ENCODE measurements at regions of chr12 and their contacts with region 1.

Region 1: GRCh38 chr12:110577717-110578521 is 5.2 kb downstream of the PPTC7 start:
- DNase-seq: peak; percentile 66 to 89 (median 89)
- H3K4me3 ChIP-seq: peak overlapping the region in 1 of 3 experiments; percentile 4
- H3K4me3 Mint-ChIP-seq: peak overlapping the region; percentile 27 to 47
- H3K27ac ChIP-seq: peak overlapping the region; percentile 38 to 92
- H3K27ac Mint-ChIP-seq: peak overlapping the region; percentile 87 to 98 (median 97)
- H3K4me1 ChIP-seq: peaks cover 59 to 74% of the 10 kb centered on the region in 2 donors
- H3K4me1 Mint-ChIP-seq: peaks cover 70% of the 10 kb centered on the region
- H3K27me3 ChIP-seq: no peaks in the 10 kb centered on the region
- H3K27me3 Mint-ChIP-seq: peaks cover 0 to 6% (median 0%) of the 10 kb centered on the region in 3 donors
- CTCF ChIP-seq: no peak

Region 2: GRCh38 chr12:110312581-110313360 is 265.1 kb before region 1 on chr12:
- intact Hi-C with region 1: no loop called
- DNase-seq: peak; percentile 38 to 83 (median 69)
- H3K4me3 ChIP-seq: no peak overlapping the region
- H3K4me3 Mint-ChIP-seq: peak overlapping the region in 1 of 2 donors; percentile 39
- H3K27ac ChIP-seq: peak overlapping the region; percentile 34 to 53
- H3K27ac Mint-ChIP-seq: peak overlapping the region; percentile 67 to 91 (median 80)
- H3K4me1 ChIP-seq: peaks cover 42 to 61% of the 10 kb centered on the region in 2 donors
- H3K4me1 Mint-ChIP-seq: peaks cover 52% of the 10 kb centered on the region
- H3K27me3 ChIP-seq: no peaks in the 10 kb centered on the region
- H3K27me3 Mint-ChIP-seq: peaks cover 0 to 3% (median 0%) of the 10 kb centered on the region in 3 donors
- CTCF ChIP-seq: no peak

Region 3: DNA sequence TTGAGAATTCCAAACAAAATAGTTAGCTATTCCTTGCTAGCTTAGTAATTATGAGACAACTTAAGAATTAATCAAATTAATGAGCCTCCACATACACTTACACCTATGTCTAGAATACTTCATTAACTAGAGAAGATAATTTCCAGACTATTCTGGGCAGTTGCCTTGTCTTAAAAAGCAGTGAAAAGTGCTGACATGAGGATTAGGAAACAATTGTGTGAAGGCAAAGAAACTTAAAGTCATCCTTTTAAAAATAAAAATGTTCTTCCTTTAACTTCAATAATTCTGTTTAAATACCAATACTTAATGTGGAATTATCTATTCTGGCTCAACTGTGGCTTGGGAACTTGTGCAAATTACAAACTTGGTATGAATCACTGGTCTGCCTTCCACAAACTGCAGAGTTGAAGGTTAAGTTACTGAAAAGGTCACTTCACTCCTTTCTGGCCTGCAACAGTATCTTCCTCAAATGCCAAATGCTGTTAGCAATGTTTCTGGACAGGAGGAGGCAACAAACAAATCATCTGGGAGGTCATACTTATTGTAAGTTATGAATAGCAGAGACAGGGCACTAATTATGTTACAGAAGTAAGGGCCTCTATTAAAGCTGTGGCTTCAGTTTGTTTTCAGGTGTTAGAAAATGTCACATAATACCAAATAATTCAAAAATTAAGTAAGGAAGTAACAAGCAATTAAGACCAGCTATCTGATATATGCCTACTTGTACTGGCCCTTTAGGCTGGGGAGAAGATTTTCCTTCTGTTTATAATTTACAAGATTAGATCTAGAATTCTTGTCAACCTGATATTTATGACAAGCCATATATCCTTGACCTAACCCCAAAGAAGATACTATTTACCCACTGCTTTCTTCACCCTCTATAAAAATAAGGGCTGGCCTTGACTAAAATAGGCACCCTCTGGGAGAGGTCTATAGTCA is 13.9 kb before region 1 on chr12:
- intact Hi-C with region 1: loop called in 1 of 2 experiments (anchors 2 kb)
- DNase-seq: peak; percentile 43 to 80 (median 70)
- H3K4me3 ChIP-seq: peak overlapping the region in 1 of 3 experiments; percentile 43
- H3K4me3 Mint-ChIP-seq: peak overlapping the region in 1 of 2 donors; percentile 15
- H3K27ac ChIP-seq: peak overlapping the region; percentile 85 to 87
- H3K27ac Mint-ChIP-seq: peak overlapping the region; percentile 90 to 96 (median 94)
- H3K4me1 ChIP-seq: peaks cover 45 to 53% of the 10 kb centered on the region in 2 donors
- H3K4me1 Mint-ChIP-seq: peaks cover 68% of the 10 kb centered on the region
- H3K27me3 ChIP-seq: no peaks in the 10 kb centered on the region
- H3K27me3 Mint-ChIP-seq: no peaks in the 10 kb centered on the region
- CTCF ChIP-seq: no peak

Measured in CD14-positive monocyte (primary cell).